BJ (cell line): ENCODE measurements at regions of chr17 and their contacts with region 1.

Region 1: DNA sequence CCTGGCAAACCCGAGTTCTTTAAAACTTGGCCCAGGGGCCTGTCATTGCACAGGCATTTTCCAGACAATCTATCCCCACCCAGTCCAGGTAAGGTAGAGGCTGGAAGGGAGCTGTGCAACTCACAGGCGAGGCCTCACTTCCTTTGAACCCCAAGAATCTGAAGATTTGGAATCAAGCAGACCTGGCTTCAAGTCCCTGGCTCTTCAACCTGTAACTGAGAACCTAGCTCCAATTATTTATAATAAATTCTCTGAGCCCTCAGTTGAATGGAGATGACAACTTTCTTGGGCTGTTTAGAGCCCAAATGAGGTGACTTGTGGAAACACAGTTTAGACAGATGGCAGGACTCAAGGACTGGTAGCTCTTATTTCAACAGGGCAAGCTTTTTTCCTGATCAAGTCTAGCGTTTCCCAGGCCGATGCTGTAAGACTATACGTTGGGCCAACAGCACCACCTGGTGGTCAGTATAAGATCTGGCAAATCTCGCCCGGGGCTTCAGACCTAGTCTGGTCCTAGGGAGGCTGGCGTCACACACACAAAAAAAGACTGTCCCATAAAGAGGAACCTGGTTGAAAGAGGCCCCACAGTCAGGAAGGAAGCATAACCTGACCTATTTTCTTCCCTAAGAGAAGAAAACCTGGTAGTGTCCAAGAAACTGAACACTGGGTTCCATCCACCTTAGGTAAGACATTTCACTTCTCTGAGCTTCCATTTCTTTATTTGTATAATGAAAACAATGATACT is 117.9 kb downstream of the C17orf67 start:
- DNase-seq: no peak
- H3K4me3 ChIP-seq: no peak overlapping the region
- H3K27me3 ChIP-seq: no peaks in the 10 kb centered on the region; the same call in 1 of the 2 replicates
- CTCF ChIP-seq: peak; percentile 80

Region 2: DNA sequence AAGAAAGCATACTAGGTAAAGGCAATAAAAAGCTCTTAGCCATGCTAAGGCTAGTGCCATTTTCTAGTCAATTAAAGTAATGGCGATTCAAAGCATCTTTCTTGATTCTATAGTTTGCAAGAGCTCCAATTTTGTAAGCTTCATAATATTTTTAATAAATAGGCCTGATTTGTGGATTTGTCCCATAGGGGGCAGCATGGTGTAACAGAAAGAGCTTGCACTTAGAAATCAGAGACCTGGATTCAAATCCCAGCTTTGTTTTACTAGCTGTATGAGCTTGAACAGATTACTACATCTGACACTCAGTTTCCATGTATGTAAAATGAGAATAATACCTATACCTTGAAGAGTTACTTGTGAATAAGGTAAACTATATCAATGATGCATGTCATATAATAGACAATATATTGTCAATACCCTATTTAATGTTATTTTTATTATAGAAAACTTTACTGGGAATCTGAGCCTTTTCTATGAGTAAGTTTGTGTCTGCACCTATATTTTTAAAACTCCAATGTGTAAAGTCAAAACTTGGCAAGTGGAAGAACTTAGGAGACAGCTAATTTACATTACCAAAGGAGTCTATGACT is 215.9 kb before region 1 on chr17:
- CTCF ChIA-PET with region 1: interaction called, 14 read pairs
- POLR2A ChIA-PET with region 1: no interaction called
- DNase-seq: no peak
- H3K4me3 ChIP-seq: no peak overlapping the region
- H3K27me3 ChIP-seq: 0 out of 2 replicates have a peak, but pooled peaks cover 2% of the 10 kb centered on the region
- CTCF ChIP-seq: peak; percentile 49

Region 3: GRCh38 chr17:56592487-56593085 is 123.2 kb before region 1 on chr17:
- CTCF ChIA-PET with region 1: interaction called, 274 read pairs
- POLR2A ChIA-PET with region 1: no interaction called
- DNase-seq: no peak
- H3K4me3 ChIP-seq: peak overlapping the region; percentile 49
- H3K27me3 ChIP-seq: peaks cover 21% of the 10 kb centered on the region
- CTCF ChIP-seq: peak; percentile 58

Region 4: GRCh38 chr17:56679115-56679766 is 36.5 kb before region 1 on chr17:
- CTCF ChIA-PET with region 1: interaction called, 15 read pairs
- POLR2A ChIA-PET with region 1: no interaction called
- DNase-seq: no peak
- H3K4me3 ChIP-seq: no peak overlapping the region
- H3K27me3 ChIP-seq: peaks cover 28% of the 10 kb centered on the region
- CTCF ChIP-seq: peak; percentile 72

Region 5: GRCh38 chr17:56690486-56691291 is 25.1 kb before region 1 on chr17:
- CTCF ChIA-PET with region 1: interaction called, 12 read pairs
- POLR2A ChIA-PET with region 1: no interaction called
- DNase-seq: no peak
- H3K4me3 ChIP-seq: no peak overlapping the region
- H3K27me3 ChIP-seq: no peaks in the 10 kb centered on the region
- CTCF ChIP-seq: no peak

Region 6: DNA sequence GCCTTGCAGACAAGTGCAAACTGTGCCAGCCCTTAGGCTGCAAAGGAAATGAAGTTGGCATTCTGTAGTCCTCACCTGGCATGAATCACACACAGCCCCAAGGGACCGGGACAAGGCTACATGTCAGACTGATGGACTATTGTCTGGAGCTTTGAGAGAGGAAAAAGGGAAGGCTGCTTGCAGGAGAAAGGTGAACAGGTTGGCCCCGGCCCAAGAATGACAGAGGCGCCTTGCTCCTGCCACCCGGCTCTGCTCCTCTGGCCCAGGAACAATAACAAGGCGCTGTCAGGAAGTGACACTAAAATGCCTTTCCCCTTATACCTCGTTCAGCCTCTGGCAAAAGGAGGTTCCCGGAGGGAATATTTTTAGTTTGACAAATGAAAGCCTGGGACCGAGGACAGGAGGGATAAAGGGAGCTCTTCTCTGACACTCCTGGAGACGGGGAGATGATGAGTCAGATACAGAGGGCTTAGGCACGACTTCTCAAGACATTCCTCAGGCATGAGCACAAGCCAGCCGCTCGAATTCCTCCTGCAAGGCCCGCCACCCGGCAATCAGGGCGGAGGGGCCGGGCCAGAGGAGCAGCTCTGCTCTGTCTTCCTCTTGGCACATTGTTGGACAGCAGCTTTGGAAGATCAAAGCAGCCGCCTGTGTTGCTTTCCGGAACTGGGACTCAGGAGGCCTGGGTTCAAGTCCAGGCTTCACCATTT is 16.4 kb before region 1 on chr17:
- CTCF ChIA-PET with region 1: interaction called, 12 read pairs
- POLR2A ChIA-PET with region 1: no interaction called
- DNase-seq: peak; percentile 92
- H3K4me3 ChIP-seq: no peak overlapping the region
- H3K27me3 ChIP-seq: no peaks in the 10 kb centered on the region
- CTCF ChIP-seq: no peak

Region 7: GRCh38 chr17:56808503-56808902 is 92.7 kb after region 1 on chr17:
- CTCF ChIA-PET with region 1: no interaction called
- POLR2A ChIA-PET with region 1: no interaction called
- DNase-seq: no peak
- H3K4me3 ChIP-seq: no peak overlapping the region
- H3K27me3 ChIP-seq: no peaks in the 10 kb centered on the region
- CTCF ChIP-seq: no peak